OCI-LY7 (cell line): ENCODE measurements at regions of chr3 and their contacts with region 1.

Region 1: GRCh38 chr3:13249667-13250390 is 170.3 kb downstream of the NUP210 start:
- DNase-seq: no peak
- H3K4me3 ChIP-seq: no peak overlapping the region
- H3K27ac ChIP-seq: no peak overlapping the region
- H3K4me1 ChIP-seq: no peaks in the 10 kb centered on the region
- CTCF ChIP-seq: no peak

Region 2: GRCh38 chr3:12901623-12902045 is 348.2 kb before region 1 on chr3:
- CTCF ChIA-PET with region 1: no interaction called
- POLR2A ChIA-PET with region 1: no interaction called
- intact Hi-C with region 1: no loop called
- DNase-seq: peak; percentile 60
- H3K4me3 ChIP-seq: no peak overlapping the region
- H3K27ac ChIP-seq: no peak overlapping the region
- H3K4me1 ChIP-seq: peaks cover 12% of the 10 kb centered on the region
- CTCF ChIP-seq: peak; percentile 56

Region 3: DNA sequence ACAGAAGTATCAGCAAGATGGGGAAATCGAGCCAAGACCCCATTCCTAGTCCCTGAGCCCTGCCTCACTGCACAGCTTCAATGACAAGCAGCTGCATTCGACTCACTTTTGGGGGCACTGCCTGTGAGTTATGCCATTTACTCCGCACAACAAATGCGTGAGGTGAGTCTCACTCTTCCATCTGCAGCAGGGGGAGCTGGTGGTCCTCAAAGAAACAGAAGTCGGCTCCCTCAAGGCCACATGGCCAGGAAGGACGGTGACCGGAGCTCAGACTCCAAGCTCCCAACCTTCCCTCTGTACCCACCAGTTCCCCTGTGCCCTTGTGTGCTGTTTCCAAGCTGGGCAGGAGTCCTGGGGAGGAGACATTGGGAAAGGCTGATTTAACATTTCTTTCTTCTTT is 48.9 kb before region 1 on chr3:
- CTCF ChIA-PET with region 1: no interaction called
- POLR2A ChIA-PET with region 1: no interaction called
- intact Hi-C with region 1: no loop called
- DNase-seq: peak; percentile 39
- H3K4me3 ChIP-seq: no peak overlapping the region
- H3K27ac ChIP-seq: no peak overlapping the region
- H3K4me1 ChIP-seq: peaks cover 9% of the 10 kb centered on the region
- CTCF ChIP-seq: peak; percentile 58

Region 4: GRCh38 chr3:13484851-13485590 is 235.2 kb after region 1 on chr3:
- CTCF ChIA-PET with region 1: interaction called, 12 read pairs
- POLR2A ChIA-PET with region 1: no interaction called
- intact Hi-C with region 1: no loop called
- DNase-seq: no peak
- H3K4me3 ChIP-seq: no peak overlapping the region
- H3K27ac ChIP-seq: no peak overlapping the region
- H3K4me1 ChIP-seq: peaks cover 5% of the 10 kb centered on the region
- CTCF ChIP-seq: no peak

Region 5: GRCh38 chr3:13528217-13528867 is 278.5 kb after region 1 on chr3:
- CTCF ChIA-PET with region 1: no interaction called
- POLR2A ChIA-PET with region 1: no interaction called
- intact Hi-C with region 1: no loop called
- DNase-seq: no peak
- H3K4me3 ChIP-seq: no peak overlapping the region
- H3K27ac ChIP-seq: no peak overlapping the region
- H3K4me1 ChIP-seq: no peaks in the 10 kb centered on the region
- CTCF ChIP-seq: no peak; the same call in 1 of the 2 replicates

Region 6: DNA sequence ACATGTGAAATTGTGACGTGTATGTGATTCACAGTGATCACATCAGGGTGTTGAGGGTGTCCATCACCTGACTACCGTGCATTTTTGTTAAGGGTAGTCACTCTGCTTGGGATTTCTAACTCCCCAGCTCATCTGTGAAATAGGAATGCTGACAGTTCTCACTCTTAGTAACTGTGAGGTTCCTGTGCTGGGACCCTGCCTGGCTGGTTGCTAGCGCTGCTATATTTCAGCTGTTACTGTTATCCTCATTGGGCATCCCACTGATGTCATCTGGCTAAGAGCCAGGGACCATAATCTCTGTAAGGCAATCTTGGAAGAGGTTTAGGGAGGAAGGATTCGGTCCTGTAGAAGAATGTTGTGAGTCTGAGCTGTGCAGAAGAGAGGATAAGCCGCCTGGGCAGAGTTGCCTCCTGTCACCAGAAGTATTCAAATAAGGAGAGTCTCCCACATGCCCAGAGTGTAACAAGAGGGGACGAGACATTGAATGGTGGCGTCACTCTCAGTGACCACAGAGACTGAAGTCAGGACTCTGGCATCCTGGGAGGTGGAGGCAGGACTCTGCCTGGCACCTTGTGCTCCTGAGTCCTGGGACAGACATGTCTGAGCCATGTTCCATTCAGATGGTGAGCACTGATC is 351.2 kb after region 1 on chr3:
- CTCF ChIA-PET with region 1: no interaction called
- POLR2A ChIA-PET with region 1: no interaction called
- intact Hi-C with region 1: no loop called
- DNase-seq: no peak
- H3K4me3 ChIP-seq: no peak overlapping the region
- H3K27ac ChIP-seq: no peak overlapping the region
- H3K4me1 ChIP-seq: no peaks in the 10 kb centered on the region
- CTCF ChIP-seq: no peak